ENCODE measurements at regions of chr1 and their contacts with region 1.

Region 1: DNA sequence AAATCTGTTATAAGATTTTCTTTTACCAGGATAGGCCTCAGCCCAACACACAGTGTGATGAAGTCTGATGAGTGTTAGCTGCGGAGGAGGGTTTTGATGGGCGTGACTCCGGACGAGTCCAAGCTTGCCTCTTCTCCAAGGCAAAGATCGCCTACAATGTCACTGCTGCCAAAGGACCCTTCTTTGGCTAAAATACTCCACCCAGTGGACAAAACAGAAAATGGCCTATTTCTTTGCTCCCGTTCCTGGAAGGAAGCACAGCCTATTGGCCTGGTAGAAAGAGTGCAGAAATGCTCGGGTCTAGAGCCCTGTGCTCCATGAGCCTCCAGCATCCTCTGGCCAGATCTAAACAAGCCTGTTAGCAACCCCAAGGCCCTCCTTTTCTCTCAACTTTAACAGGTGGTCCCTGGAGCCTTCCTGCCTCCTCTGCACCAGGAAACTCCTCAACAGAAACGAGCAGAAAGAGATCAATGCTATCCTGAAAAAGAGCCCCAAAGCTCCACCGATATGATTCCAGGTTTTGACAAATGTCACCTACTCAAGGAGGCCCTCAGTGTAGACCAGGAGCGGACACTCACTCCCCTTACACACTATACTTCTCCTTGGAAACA is 3.4 kb upstream of the CASQ2 start:
- DNase-seq: peak; percentile 94
- H3K4me3 Mint-ChIP-seq: no peak overlapping the region
- H3K27ac Mint-ChIP-seq: peak overlapping the region; percentile 49
- H3K4me1 Mint-ChIP-seq: peaks cover 16% of the 10 kb centered on the region
- H3K27me3 Mint-ChIP-seq: no peaks in the 10 kb centered on the region
- CTCF ChIP-seq: peak; percentile 70

Region 2: GRCh38 chr1:115717541-115717940 is 54.4 kb before region 1 on chr1:
- CTCF ChIA-PET with region 1: interaction called, 11 read pairs
- POLR2A ChIA-PET with region 1: interaction called, 3 read pairs
- intact Hi-C with region 1: loop called (anchors 1 kb)
- DNase-seq: peak; percentile 67
- H3K4me3 Mint-ChIP-seq: no peak overlapping the region
- H3K27ac Mint-ChIP-seq: no peak overlapping the region
- H3K4me1 Mint-ChIP-seq: peaks cover 7% of the 10 kb centered on the region
- H3K27me3 Mint-ChIP-seq: no peaks in the 10 kb centered on the region
- CTCF ChIP-seq: peak; percentile 42

Region 3: DNA sequence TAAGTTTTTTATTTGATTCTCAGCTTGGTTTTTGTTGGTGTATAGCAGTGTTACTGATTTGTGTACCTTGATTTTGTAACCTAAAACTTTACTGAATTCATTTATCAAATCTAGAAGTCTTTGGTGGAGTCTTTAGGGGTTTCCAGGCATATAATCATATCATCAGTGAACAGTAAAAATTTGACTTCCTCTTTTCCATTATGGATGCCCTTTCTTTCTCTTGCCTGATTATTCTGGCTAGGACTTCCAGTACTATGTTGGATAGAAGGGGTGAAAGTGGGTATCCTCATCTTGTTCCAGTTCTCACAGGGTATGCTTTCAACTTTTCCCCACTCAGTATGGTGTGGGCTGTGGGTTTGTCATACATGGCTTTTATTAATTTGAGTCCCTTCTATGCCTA is 315.7 kb after region 1 on chr1:
- CTCF ChIA-PET with region 1: no interaction called
- POLR2A ChIA-PET with region 1: no interaction called
- intact Hi-C with region 1: no loop called
- DNase-seq: no peak
- H3K4me3 Mint-ChIP-seq: no peak overlapping the region
- H3K27ac Mint-ChIP-seq: no peak overlapping the region
- H3K4me1 Mint-ChIP-seq: peaks cover 5% of the 10 kb centered on the region
- H3K27me3 Mint-ChIP-seq: no peaks in the 10 kb centered on the region
- CTCF ChIP-seq: no peak

Measured in MCF 10A (cell line).